ENCODE measurements at regions of chr1 and their contacts with region 1.

Region 1: GRCh38 chr1:24321697-24322469 is 2.7 kb downstream of the GRHL3 start:
- DNase-seq: peak; percentile 95
- H3K4me3 Mint-ChIP-seq: peak overlapping the region; percentile 74
- H3K27ac Mint-ChIP-seq: peak overlapping the region; percentile 87
- H3K4me1 Mint-ChIP-seq: peaks cover 64% of the 10 kb centered on the region
- H3K27me3 Mint-ChIP-seq: no peaks in the 10 kb centered on the region
- CTCF ChIP-seq: no peak

Region 2: DNA sequence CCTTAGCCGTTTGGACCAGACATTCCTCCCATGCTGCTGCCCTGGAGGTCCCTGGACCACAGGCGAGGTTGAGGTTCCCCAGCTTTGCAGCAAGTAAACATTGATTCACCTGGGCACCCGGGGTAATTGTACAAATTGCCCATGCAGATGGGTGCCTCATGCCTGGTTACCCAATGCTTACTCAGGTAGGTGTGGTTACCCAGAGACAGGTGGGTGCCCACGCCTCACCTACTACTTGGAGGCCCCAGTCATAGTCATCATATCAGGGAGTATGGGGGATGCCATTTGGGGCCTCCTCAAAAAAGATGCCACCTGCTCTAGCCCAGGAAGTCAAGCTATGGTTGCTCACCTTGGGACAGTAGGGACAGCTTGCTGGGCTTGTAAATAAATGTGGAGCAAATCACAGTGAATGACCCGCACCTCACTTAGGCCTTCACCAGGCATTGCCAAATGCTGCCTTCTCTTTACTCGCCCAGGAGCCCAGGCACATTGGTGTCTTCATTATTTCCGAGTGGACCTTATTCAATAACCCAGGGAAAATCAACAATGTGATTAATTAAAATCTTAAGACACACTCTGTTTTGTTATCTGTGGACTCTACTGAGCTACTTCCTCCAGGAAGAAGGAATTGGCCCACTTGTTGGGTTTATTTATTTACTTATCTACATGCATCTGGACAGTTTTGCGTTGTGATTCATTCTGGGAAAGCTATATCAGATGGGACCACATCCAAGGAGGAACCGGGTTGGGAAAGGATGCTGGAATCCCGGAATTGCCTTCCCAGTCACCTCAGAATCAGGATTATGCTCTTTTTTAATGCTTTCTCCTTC is 38.3 kb before region 1 on chr1:
- CTCF ChIA-PET with region 1: interaction called, 3 read pairs
- POLR2A ChIA-PET with region 1: interaction called, 400 read pairs
- intact Hi-C with region 1: loop called (anchors 5 kb)
- DNase-seq: peak; percentile 96
- H3K4me3 Mint-ChIP-seq: peak overlapping the region; percentile 18
- H3K27ac Mint-ChIP-seq: peak overlapping the region; percentile 86
- H3K4me1 Mint-ChIP-seq: peaks cover 31% of the 10 kb centered on the region
- H3K27me3 Mint-ChIP-seq: no peaks in the 10 kb centered on the region
- CTCF ChIP-seq: no peak

Region 3: DNA sequence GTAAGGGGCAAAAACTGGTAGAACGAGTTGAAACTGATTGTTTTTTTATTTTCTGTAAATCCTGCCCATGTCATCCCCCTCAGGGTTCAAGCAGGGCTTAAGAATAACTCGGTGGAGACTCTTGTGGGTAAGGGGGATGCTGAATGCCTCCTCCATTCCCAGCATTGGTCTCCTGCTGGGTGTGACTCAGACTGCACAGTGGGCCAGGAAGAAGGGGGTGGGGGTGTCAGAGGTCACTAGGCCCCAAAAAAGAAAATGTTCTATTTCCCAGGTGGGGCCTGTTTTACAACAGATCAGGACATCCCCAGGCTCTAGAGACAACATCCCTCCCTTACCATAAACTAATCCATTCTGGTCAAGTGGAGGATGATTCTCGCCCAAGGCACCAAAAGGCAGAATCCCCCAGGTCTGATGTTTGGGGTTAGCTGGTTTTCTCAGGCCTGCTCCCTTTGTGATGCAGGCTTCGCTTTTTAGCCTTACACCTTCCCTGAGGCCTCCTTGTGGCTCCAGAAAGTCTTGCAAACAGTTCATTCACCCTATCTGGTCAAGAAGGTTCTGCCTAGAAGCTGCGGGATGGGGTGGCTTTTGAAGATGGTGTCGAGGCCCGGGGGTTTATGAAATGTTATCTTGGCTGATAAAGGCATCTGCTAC is 13.4 kb before region 1 on chr1:
- CTCF ChIA-PET with region 1: interaction called, 3 read pairs
- POLR2A ChIA-PET with region 1: interaction called, 400 read pairs
- intact Hi-C with region 1: no loop called
- DNase-seq: peak; percentile 50
- H3K4me3 Mint-ChIP-seq: no peak overlapping the region
- H3K27ac Mint-ChIP-seq: no peak overlapping the region
- H3K4me1 Mint-ChIP-seq: peaks cover 7% of the 10 kb centered on the region
- H3K27me3 Mint-ChIP-seq: no peaks in the 10 kb centered on the region
- CTCF ChIP-seq: no peak

Region 4: DNA sequence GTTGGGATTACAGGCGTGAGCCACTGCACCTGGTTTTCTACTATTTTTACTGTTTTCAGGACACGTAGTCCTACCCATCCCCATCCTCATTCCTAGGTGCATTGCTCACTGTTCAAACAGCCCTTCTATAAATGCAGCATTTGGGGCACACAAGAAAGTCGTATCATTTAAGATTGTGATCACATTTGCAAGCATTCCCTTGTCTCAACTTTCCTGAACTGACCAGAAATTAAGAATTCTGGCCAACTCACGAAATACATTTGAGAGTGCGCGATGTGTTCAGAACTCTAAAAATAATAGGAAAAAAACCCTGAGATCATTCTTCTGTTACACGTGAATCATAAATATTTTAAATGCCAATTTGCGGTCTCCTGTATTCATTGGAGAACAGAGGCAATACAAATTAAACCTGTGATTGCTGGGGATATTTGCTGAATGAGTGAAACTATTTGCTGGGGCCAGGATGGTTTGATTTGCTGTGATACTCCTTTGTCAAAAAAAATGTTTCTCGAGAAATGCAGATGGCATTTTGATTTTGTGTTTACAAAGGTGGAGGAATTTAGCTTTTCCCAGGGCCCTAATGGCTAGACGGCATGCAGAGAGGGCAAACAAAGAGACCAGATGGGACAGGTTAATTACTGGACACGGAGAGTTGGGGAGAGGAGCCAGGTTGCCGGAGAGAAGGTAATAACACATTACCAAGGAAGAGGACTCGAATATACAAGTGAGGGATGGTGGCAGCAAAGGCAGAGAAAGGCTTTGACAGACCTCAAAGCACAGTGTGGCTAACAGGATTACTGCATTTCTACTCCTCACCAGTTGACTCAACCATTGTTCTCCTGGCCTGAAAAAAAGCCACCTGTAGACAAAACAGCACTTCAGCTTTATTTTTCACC is 53.3 kb after region 1 on chr1:
- CTCF ChIA-PET with region 1: interaction called, 7 read pairs
- POLR2A ChIA-PET with region 1: interaction called, 54 read pairs
- intact Hi-C with region 1: loop called (anchors 2 kb)
- DNase-seq: peak; percentile 43
- H3K4me3 Mint-ChIP-seq: peak overlapping the region; percentile 56
- H3K27ac Mint-ChIP-seq: peak overlapping the region; percentile 99
- H3K4me1 Mint-ChIP-seq: peaks cover 35% of the 10 kb centered on the region
- H3K27me3 Mint-ChIP-seq: no peaks in the 10 kb centered on the region
- CTCF ChIP-seq: no peak

Measured in MCF 10A (cell line).